ENCODE measurements at regions of chr14 and their contacts with region 1.

Region 1: GRCh38 chr14:89973234-89973823 is 17.6 kb downstream of the TDP1 start:
- DNase-seq: peak; percentile 58
- CTCF ChIP-seq: peak; percentile 62

Region 2: GRCh38 chr14:89936658-89937185 is 36.6 kb before region 1 on chr14:
- CTCF ChIA-PET with region 1: interaction called, 24 read pairs
- POLR2A ChIA-PET with region 1: no interaction called
- DNase-seq: no peak
- CTCF ChIP-seq: no peak

Region 3: GRCh38 chr14:89959853-89960445 is 13.4 kb before region 1 on chr14:
- CTCF ChIA-PET with region 1: interaction called, 56 read pairs
- POLR2A ChIA-PET with region 1: interaction called, 5 read pairs
- DNase-seq: no peak
- CTCF ChIP-seq: no peak

Region 4: DNA sequence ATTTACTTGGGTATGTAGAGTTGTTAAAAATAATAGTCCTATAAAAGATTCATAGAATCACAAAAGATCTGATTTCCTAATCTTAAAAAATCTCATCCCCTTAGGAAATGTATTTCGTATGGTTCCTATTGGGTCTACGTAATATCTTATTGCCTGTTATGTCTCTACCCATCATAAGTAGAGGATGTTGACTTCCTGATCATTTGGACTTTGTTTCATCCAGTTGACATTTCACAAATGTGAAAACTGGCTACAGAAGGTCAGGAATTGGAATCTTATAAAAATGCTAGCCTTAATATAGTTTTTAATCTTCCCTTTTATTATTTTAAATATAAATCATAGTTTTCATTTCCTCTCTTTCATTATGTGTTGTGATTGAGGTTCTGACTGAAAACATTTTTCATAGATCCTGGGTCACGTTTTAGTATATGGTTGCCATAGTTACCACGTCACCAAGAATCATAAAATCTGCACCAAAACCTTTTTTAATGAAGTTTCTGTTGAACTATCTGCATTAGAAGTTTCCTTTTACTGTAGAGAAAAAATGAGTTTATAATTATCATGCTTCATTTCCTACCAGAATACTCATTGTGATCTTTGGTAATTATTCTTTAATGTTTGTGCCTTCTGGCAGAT is 27.7 kb after region 1 on chr14:
- CTCF ChIA-PET with region 1: interaction called, 15 read pairs
- POLR2A ChIA-PET with region 1: no interaction called
- DNase-seq: no peak
- CTCF ChIP-seq: no peak

Region 5: DNA sequence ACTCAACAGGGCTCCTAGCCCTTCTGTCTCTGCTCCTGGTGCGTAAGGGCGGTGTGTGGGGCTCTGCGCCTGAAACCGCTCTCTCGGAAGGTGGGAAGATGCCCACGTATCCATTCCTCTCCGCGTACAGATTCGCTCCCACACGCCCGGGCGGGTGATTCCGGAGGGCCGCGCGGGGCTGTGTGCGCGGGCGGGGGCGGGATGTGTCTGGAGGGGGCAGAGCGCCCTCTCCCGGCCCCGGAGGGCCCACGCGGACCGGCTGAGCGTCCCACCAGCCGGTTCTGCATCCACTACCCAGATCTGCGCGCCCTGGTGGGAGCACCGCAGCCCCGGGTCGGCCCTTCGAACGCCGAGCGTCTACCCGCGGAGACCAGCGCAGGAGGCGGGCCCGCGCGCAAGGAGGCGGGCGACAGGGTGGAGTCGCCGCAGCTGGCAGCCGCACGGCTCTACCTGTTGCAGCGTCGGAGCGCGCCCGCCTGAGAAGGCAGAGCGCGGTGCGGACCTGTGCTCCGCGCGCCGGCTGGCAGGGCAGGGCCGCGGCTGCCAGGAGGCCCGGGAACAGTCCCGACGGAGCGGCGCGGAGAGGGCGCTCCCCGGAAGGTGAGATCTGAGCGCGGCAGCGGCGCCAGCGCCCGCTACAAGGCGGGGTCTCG is 87.1 kb after region 1 on chr14:
- CTCF ChIA-PET with region 1: interaction called, 19 read pairs
- POLR2A ChIA-PET with region 1: no interaction called
- DNase-seq: peak; percentile 79
- CTCF ChIP-seq: peak; percentile 71

Region 6: GRCh38 chr14:90191585-90191984 is 218.3 kb after region 1 on chr14:
- CTCF ChIA-PET with region 1: no interaction called
- POLR2A ChIA-PET with region 1: no interaction called
- DNase-seq: no peak
- CTCF ChIP-seq: no peak